MCF 10A (cell line): ENCODE measurements at regions of chr4 and their contacts with region 1.

Region 1: DNA sequence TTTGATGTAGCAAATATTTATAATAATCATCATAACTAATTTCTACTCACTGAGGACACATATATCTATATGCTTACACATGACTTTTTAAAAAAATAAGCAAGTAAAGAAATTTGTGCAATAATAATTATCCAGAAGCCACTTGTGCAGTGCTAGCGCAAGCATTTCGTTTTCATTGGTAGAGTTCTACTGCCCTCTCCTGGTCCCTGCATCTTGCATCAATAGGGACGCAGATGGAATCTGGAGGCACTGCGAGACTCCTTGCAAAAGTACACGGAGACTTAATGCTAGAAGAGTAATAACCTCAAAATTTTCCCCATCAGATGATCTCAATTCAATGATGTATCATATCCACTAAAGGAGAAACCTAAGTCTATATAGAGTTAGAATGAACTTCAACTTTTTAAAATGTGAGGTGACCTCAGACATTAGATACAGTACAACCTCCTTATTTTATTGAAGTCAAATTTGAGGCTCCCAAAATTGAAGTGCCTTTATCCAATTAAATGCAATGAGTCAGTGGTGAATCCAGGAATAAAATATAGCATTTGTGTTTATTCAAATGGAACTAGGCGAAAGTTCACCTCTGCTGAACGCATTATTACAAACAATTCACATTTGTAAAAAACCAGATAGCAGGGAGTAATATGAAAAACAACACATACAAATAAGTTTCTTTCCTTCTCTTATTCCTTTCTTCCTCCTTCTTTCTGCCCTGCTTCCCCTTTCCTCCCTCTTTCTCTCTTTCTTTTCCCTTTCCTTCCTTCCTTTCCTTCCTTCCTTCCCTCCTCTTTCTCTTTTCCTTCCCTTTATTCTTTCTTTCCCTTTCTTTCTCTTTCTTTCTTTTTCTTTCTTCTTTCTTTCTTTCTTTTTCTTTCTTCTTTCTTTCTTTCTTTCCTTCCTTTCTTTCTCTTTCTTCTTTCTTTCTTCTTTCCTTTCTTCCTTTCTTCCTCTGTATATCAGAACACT is 450.0 kb downstream of the ANKRD50 start:
- DNase-seq: peak; percentile 87
- H3K4me3 Mint-ChIP-seq: no peak overlapping the region
- H3K27ac Mint-ChIP-seq: no peak overlapping the region
- H3K4me1 Mint-ChIP-seq: peaks cover 5% of the 10 kb centered on the region
- H3K27me3 Mint-ChIP-seq: no peaks in the 10 kb centered on the region
- CTCF ChIP-seq: peak; percentile 77

Region 2: GRCh38 chr4:123102897-123103471 is 1159.5 kb before region 1 on chr4:
- CTCF ChIA-PET with region 1: interaction called, 3 read pairs
- POLR2A ChIA-PET with region 1: no interaction called
- intact Hi-C with region 1: loop called (anchors 5 kb)
- DNase-seq: peak; percentile 49
- H3K4me3 Mint-ChIP-seq: no peak overlapping the region
- H3K27ac Mint-ChIP-seq: peak overlapping the region; percentile 29
- H3K4me1 Mint-ChIP-seq: peaks cover 5% of the 10 kb centered on the region
- H3K27me3 Mint-ChIP-seq: no peaks in the 10 kb centered on the region
- CTCF ChIP-seq: peak; percentile 58

Region 3: GRCh38 chr4:123127218-123127617 is 1135.3 kb before region 1 on chr4:
- CTCF ChIA-PET with region 1: no interaction called
- POLR2A ChIA-PET with region 1: no interaction called
- intact Hi-C with region 1: loop called (anchors 5 kb)
- DNase-seq: peak; percentile 16
- H3K4me3 Mint-ChIP-seq: no peak overlapping the region
- H3K27ac Mint-ChIP-seq: no peak overlapping the region
- H3K4me1 Mint-ChIP-seq: no peaks in the 10 kb centered on the region
- H3K27me3 Mint-ChIP-seq: no peaks in the 10 kb centered on the region
- CTCF ChIP-seq: peak; percentile 42

Region 4: GRCh38 chr4:123350191-123350544 is 912.3 kb before region 1 on chr4:
- CTCF ChIA-PET with region 1: interaction called, 4 read pairs
- POLR2A ChIA-PET with region 1: no interaction called
- intact Hi-C with region 1: loop called (anchors 5 kb)
- DNase-seq: peak; percentile 73
- H3K4me3 Mint-ChIP-seq: no peak overlapping the region
- H3K27ac Mint-ChIP-seq: no peak overlapping the region
- H3K4me1 Mint-ChIP-seq: peaks cover 23% of the 10 kb centered on the region
- H3K27me3 Mint-ChIP-seq: no peaks in the 10 kb centered on the region
- CTCF ChIP-seq: peak; percentile 35

Region 5: DNA sequence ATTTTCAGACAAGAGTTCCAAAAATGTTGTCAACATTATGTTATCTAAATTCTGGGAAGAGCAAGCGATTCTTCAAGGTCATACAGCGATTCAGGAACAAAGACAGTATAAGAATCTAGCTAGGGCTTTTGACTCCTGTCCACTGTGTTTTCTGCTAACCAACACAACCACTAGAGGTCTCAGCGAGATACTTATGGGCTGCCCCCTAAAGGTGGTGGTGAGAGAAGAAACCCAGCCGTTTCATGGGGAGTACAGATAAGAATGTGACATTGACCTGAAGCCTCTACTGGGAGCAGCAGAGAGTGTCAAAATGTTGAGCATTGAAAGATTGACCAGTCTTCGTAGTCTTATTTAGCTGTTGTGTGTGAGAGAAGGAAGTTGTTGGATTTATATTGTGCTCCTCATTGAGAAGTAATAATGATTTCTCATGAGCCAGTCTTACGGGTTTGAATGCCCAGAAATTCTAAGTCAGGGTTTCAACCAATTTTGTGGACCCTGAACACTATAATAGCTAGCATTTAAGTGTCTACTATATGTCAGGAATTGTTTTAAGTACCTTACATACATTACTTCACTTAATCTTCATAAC is 697.6 kb before region 1 on chr4:
- CTCF ChIA-PET with region 1: no interaction called
- POLR2A ChIA-PET with region 1: no interaction called
- intact Hi-C with region 1: loop called (anchors 10 kb)
- DNase-seq: peak; percentile 86
- H3K4me3 Mint-ChIP-seq: no peak overlapping the region
- H3K27ac Mint-ChIP-seq: no peak overlapping the region
- H3K4me1 Mint-ChIP-seq: peaks cover 7% of the 10 kb centered on the region
- H3K27me3 Mint-ChIP-seq: no peaks in the 10 kb centered on the region
- CTCF ChIP-seq: peak; percentile 55

Region 6: DNA sequence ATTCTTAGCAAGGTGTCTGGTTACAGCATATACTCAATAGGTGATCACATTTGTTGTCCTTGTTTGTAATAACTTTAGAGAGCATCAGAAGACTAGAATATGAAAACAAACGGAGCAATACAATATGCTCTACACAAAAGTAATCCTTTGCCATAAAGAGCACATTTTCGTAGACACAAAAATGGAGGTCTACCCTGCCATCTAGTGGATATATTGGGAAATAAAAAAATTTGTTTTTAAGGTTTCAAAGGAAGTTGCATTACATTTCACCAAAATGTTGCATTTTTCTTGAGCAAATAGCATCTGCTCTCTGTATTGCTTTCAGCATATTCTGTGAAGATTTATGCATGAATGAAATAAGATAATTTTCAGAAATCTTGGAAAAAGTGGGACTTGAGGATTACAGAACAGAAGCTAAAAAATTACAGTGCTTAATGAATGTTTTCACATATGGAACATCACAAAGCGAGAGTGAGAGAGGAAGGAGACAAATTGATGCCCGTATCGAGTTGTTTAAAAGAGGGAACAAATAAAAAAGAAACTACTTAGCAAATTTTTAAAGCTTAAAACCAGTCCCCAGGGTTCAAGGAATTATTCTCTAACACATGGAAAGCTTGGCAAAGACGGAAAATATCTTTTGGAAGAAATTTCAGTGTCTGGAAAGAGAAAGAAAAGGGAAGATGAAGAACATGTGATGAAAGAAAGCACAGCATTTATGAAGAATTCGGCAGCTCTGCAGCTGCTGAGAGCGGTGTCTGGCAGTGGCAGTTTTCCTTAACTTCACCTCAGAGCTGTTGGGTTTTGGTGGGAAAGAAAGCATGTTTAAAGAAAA is 60.0 kb after region 1 on chr4:
- CTCF ChIA-PET with region 1: interaction called, 4 read pairs
- POLR2A ChIA-PET with region 1: no interaction called
- intact Hi-C with region 1: loop called (anchors 5 kb)
- DNase-seq: peak; percentile 59
- H3K4me3 Mint-ChIP-seq: no peak overlapping the region
- H3K27ac Mint-ChIP-seq: no peak overlapping the region
- H3K4me1 Mint-ChIP-seq: no peaks in the 10 kb centered on the region
- H3K27me3 Mint-ChIP-seq: no peaks in the 10 kb centered on the region
- CTCF ChIP-seq: peak; percentile 52